Activated CD4-positive, alpha-beta T cell treated with anti-CD3 and anti-CD28 coated beads for 36 hours (primary cell): ENCODE measurements at regions of chr9 and their contacts with region 1.

Region 1: GRCh38 chr9:132780230-132781007 is 97.7 kb downstream of the AK8 start:
- DNase-seq: peak; percentile 28
- ATAC-seq: peak; percentile 68
- H3K4me3 Mint-ChIP-seq: no peak overlapping the region
- H3K27ac Mint-ChIP-seq: peak overlapping the region; percentile 42
- H3K4me1 Mint-ChIP-seq: peaks cover 12% of the 10 kb centered on the region
- H3K27me3 Mint-ChIP-seq: peaks cover 22% of the 10 kb centered on the region

Region 2: DNA sequence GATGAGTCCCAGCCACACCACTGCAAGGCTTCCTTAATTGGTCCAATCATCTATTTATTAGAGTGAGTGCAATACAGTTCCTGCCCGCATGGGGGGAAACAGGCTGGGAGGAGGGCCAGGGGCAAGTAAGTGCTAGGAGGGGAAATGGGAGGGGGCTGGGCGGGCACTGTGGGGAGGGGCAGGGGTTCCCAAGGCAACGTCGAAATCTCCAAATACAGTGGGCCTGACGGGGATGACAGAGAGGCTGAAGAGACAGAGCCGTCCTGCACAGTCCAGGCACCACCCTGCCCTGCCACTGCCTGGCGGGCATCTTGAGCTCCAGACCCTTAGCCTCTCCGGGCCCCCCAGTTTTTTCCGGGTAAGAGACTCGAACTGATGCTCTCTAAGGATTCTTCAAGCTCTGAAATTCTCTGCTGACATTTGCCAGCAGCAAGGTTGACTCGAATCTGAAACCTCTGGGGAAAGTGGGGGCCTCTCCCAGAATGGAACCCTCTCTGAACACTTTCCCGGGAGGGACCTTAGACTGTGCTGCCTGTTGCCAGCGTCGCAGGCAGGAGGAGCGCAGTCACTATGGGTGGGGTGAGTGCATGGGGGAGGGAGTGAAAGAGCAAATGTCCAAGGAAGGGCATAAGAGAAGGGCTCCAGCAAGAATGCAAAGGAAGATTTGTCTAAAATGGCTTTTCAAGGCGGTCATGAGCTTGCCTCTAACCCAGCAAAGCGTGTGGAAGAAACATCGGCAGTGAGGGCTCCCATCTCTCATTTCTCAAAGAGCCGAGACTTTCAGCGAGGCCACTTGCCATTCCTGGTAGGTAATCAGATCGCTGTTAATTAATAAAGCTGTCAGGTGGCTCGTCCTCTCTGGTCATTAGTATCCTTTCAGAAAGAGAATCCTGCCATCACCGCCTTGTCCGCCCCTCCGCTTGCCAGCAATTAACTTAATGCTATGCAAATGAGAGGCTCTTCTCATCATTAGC is 11.2 kb before region 1 on chr9:
- CTCF ChIA-PET with region 1: interaction called, 14 read pairs
- POLR2A ChIA-PET with region 1: interaction called, 3 read pairs
- intact Hi-C with region 1: no loop called
- DNase-seq: peak; percentile 82
- ATAC-seq: peak; percentile 75
- H3K4me3 Mint-ChIP-seq: peak overlapping the region; percentile 85
- H3K27ac Mint-ChIP-seq: peak overlapping the region; percentile 94
- H3K4me1 Mint-ChIP-seq: peaks cover 16% of the 10 kb centered on the region
- H3K27me3 Mint-ChIP-seq: no peaks in the 10 kb centered on the region